ENCODE measurements at regions of chr19 and their contacts with region 1.

Region 1: DNA sequence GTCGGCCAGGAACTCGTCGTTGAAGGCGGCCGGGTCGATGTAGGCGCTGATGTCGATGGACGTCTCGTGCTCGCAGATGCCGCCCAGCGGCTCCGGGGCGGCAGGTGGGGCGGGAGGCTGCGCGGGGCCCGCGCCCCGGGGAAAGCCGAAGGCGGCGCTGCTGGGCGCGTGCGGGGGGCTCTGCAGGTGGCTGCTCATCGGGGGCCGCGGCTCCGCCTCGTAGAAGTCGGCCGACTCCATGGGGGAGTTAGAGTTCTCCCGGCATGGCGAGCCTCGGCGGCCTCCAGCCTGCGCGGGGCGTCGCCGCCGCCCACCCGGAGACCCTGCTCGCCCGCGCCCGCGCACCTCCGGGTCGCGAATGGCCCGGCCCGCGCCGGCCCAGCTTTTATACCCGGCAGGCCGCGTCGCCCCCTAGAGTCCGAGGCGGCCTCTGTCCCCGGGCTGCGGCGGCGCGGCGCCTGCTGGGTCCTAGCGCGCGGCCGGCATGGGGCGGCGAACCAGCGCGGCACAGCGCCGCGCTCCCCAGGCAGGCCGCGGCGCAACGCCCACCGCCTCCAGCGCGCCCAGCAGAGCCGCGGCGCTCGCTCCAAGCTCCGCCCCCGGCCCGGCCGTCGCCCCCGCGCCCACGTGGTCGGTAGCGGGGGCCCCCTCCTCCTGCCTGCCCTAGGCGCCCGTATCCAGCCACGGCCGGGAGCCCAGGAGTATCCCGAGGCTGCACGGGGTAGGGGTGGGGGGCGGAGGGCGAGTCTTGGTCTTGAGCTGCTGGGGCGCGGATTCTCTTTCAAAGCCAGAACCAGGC is at the start of gene CEBPA:
- DNase-seq: peak; percentile 68 to 76
- H3K4me3 ChIP-seq: peak within 1 kb of the TSS; percentile 60 to 86 (median 78)
- H3K27ac ChIP-seq: peak within 1 kb of the TSS; percentile 81 to 93
- H3K4me1 ChIP-seq: peaks cover 0 to 9% of the 10 kb centered on the region in 2 donors
- H3K27me3 ChIP-seq: no peaks in the 10 kb centered on the region
- CTCF ChIP-seq: peak in 1 of 3 donors; percentile 72
- POLR2A ChIP-seq: no peak
- total RNA-seq, gene CEBPA: 35.1 to 263 (median 67.5) TPM

Region 2: GRCh38 chr19:33394006-33394849 is 91.9 kb after region 1 on chr19:
- intact Hi-C with region 1: loop called (anchors 10 kb)
- DNase-seq: no peak
- H3K4me3 ChIP-seq: peak overlapping the region in 1 of 3 donors; percentile 32
- H3K27ac ChIP-seq: peak overlapping the region; percentile 55 to 84
- H3K4me1 ChIP-seq: peaks cover 45 to 54% of the 10 kb centered on the region in 2 donors
- H3K27me3 ChIP-seq: no peaks in the 10 kb centered on the region
- CTCF ChIP-seq: no peak
- POLR2A ChIP-seq: no peak